ENCODE measurements at regions of chr6 and their contacts with region 1.

Region 1: GRCh38 chr6:36546920-36547645 is at the start of gene STK38:
- DNase-seq: peak; percentile 93 to 96
- ATAC-seq: peak; percentile 95 to 99 (median 96)
- H3K4me3 ChIP-seq: peak within 1 kb of the TSS; percentile 77 to 98 (median 93)
- H3K27ac ChIP-seq: peak within 1 kb of the TSS; percentile 89 to 100 (median 98)
- H3K4me1 ChIP-seq: peaks cover 5 to 52% (median 39%) of the 10 kb centered on the region in 9 donors
- H3K27me3 ChIP-seq: no peaks in the 10 kb centered on the region
- CTCF ChIP-seq: peak in 4 of 9 donors; percentile 8 to 33 (median 29)
- total RNA-seq, gene STK38: 13.2 to 23.8 (median 21.5) TPM

Region 2: GRCh38 chr6:36442671-36443470 is 104.2 kb before region 1 on chr6 and contains the starts of genes KCTD20 and PXT1:
- intact Hi-C with region 1: loop called in 3 of 10 experiments (anchors 2 to 10 kb)
- DNase-seq: peak; percentile 89 to 91
- ATAC-seq: peak; percentile 88 to 96 (median 93)
- H3K4me3 ChIP-seq: peak within 1 kb of the TSS; percentile 74 to 98 (median 94)
- H3K27ac ChIP-seq: peak within 1 kb of the TSS; percentile 96 to 100 (median 98)
- H3K4me1 ChIP-seq: peaks cover 8 to 51% (median 42%) of the 10 kb centered on the region in 9 donors
- H3K27me3 ChIP-seq: no peaks in the 10 kb centered on the region
- CTCF ChIP-seq: peak in 1 of 9 donors; percentile 2
- total RNA-seq, gene KCTD20: 21.4 to 36.6 (median 26.1) TPM
- total RNA-seq, gene PXT1: 0.18 to 0.34 (median 0.23) TPM in 5 of 10 donors, not detected in the others

Region 3: GRCh38 chr6:36526066-36526465 is 21.0 kb before region 1 on chr6:
- intact Hi-C with region 1: loop called in 1 of 10 experiments (anchors 1 kb)
- DNase-seq: no peak
- ATAC-seq: peak in 1 of 8 donors; percentile 13
- H3K4me3 ChIP-seq: no peak overlapping the region
- H3K27ac ChIP-seq: peak overlapping the region in 1 of 10 donors; percentile 28
- H3K4me1 ChIP-seq: peaks cover 5 to 37% (median 25%) of the 10 kb centered on the region in 9 donors
- H3K27me3 ChIP-seq: no peaks in the 10 kb centered on the region
- CTCF ChIP-seq: no peak